ENCODE measurements at regions of chr15 and their contacts with region 1.

Region 1: DNA sequence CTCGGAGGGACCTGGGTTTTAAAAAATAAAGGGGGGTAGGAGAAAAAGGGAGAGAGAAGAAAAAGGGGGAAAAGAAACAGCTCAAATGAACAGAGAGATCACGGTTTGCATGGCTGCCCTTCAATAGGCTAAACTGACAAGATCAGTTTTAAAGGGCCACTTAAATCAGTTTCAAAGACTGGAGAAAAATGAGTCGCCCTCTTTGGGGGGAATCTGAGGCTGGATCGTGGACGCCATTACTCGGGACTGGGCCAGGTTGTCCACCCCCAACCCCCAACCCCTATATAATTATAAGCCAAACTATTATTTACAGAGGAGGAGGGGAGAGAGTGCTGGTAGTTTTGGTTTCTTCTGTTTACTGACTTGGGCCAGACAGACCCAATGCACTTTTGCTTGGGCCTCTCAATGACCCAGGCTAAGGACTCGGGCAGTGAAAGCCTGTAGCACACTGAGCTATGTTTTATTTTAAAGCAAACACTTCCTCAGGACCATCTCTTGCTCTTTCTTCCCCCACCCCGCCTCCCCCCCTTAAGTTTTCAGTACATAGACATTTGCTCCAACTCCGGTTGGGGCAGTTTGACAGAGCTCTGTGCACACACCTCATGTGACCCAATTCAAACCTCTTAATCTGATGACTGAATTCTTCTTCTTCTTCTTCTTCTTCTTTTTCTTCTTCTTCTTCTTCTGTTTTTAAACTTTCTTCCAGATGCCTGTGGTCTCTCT is 6.3 kb downstream of the NR2F2 start:
- DNase-seq: no peak
- ATAC-seq: peak; percentile 3
- H3K4me3 ChIP-seq: peak overlapping the region; percentile 84
- H3K27ac ChIP-seq: peak overlapping the region; percentile 98
- H3K4me1 ChIP-seq: no peaks in the 10 kb centered on the region
- H3K27me3 ChIP-seq: no peaks in the 10 kb centered on the region
- CTCF ChIP-seq: no peak
- POLR2A ChIP-seq: no peak
- RAD21 ChIP-seq: no peak

Region 2: DNA sequence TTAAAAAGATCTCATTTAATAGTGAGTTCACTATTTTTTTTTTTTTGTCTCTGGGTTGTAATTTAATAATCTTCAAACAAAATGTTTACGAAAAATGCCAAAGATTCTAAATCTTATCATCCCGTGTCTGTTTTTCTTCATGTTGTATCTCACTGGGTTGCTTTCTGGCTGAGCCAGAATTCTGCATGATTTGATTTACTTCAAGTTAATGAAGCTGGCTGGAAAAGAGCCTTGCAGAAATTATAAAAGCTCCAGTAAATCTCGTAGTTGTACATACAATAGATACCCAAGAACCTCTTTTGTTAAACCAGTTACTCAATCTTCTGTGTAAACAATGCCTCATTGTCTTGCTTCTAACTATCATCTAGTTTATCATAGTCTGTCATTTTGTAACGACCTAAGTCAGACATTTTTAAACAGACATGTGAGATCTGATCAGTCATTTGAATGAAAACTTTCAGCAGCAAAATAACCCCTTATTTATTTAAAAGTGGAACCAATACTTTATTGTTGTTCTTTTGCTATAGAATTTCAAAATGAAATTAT is 1856.4 kb before region 1 on chr15:
- CTCF ChIA-PET with region 1: no interaction called
- POLR2A ChIA-PET with region 1: interaction called, 11 read pairs
- dilution Hi-C with region 1: no loop called
- in situ Hi-C with region 1: no loop called
- intact Hi-C with region 1: no loop called
- DNase-seq: no peak
- ATAC-seq: no peak
- H3K4me3 ChIP-seq: no peak overlapping the region
- H3K27ac ChIP-seq: no peak overlapping the region
- H3K4me1 ChIP-seq: no peaks in the 10 kb centered on the region
- H3K27me3 ChIP-seq: no peaks in the 10 kb centered on the region
- CTCF ChIP-seq: no peak
- POLR2A ChIP-seq: no peak
- RAD21 ChIP-seq: no peak

Region 3: DNA sequence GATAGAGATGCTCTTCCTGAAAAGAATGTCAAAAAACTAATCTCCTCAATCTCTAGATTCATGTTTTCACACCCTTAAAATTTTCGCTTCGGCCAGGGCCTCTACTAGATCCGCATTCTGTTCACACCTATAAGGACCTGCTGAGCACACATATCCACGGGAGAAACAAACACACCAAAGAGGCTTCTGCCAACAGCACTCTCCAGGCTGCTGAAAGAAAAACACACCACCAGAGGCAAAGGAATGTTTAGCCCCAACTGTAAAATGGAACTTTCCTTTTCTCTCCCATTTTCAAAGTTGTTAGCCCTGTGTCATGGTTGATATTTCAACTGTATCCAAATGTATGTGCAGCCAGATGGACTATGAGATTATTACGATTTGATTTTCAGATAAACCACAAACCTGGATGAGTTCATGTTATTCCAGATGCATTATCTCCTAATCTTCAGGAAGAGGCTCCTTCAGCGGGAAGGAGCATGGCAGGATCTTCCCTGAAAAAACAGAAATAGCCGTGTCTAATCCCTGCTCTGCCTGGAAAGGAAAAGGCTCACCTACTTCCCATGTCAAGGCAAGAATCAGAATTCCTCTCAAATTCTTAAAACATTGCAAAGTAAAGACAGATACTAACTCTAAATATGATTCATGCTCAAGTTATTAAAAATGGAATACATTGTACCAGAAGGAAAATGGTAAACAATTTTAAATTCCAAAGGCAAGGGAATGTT is 449.0 kb before region 1 on chr15:
- CTCF ChIA-PET with region 1: no interaction called
- POLR2A ChIA-PET with region 1: no interaction called
- dilution Hi-C with region 1: no loop called
- in situ Hi-C with region 1: no loop called
- intact Hi-C with region 1: loop called (anchors 5 kb)
- DNase-seq: peak; percentile 20
- ATAC-seq: peak; percentile 70
- H3K4me3 ChIP-seq: no peak overlapping the region
- H3K27ac ChIP-seq: no peak overlapping the region
- H3K4me1 ChIP-seq: peaks cover 6% of the 10 kb centered on the region
- H3K27me3 ChIP-seq: no peaks in the 10 kb centered on the region
- CTCF ChIP-seq: no peak
- POLR2A ChIP-seq: no peak
- RAD21 ChIP-seq: no peak

Region 4: GRCh38 chr15:96353930-96354730 is 17.3 kb after region 1 on chr15:
- CTCF ChIA-PET with region 1: no interaction called
- POLR2A ChIA-PET with region 1: no interaction called
- dilution Hi-C with region 1: no loop called
- in situ Hi-C with region 1: no loop called
- intact Hi-C with region 1: no loop called
- DNase-seq: peak; percentile 60
- ATAC-seq: peak; percentile 47
- H3K4me3 ChIP-seq: peak overlapping the region; percentile 71
- H3K27ac ChIP-seq: peak overlapping the region; percentile 89
- H3K4me1 ChIP-seq: peaks cover 13% of the 10 kb centered on the region; the same call in 1 of the 2 replicates
- H3K27me3 ChIP-seq: no peaks in the 10 kb centered on the region
- CTCF ChIP-seq: peak; percentile 57
- POLR2A ChIP-seq: no peak
- RAD21 ChIP-seq: 0 out of 2 replicates have a peak, but pooled peaks have one; percentile 4